Calu3 (cell line): ENCODE measurements at regions of chr3 and their contacts with region 1.

Region 1: GRCh38 chr3:39639344-39640236 is 169.8 kb upstream of the MYRIP start:
- DNase-seq: peak; percentile 63
- H3K4me3 Mint-ChIP-seq: no peak overlapping the region
- H3K27ac Mint-ChIP-seq: peak overlapping the region; percentile 81
- H3K4me1 Mint-ChIP-seq: peaks cover 30% of the 10 kb centered on the region
- H3K27me3 Mint-ChIP-seq: no peaks in the 10 kb centered on the region
- CTCF ChIP-seq: no peak

Region 2: GRCh38 chr3:38950581-38950980 is 689.0 kb before region 1 on chr3:
- CTCF ChIA-PET with region 1: no interaction called
- intact Hi-C with region 1: no loop called
- DNase-seq: no peak
- H3K4me3 Mint-ChIP-seq: no peak overlapping the region
- H3K27ac Mint-ChIP-seq: no peak overlapping the region
- H3K4me1 Mint-ChIP-seq: no peaks in the 10 kb centered on the region
- H3K27me3 Mint-ChIP-seq: peaks cover 65% of the 10 kb centered on the region
- CTCF ChIP-seq: no peak

Region 3: GRCh38 chr3:39707314-39707909 is 67.8 kb after region 1 on chr3:
- CTCF ChIA-PET with region 1: interaction called, 3 read pairs
- intact Hi-C with region 1: loop called (anchors 5 kb)
- DNase-seq: peak; percentile 32
- H3K4me3 Mint-ChIP-seq: no peak overlapping the region
- H3K27ac Mint-ChIP-seq: no peak overlapping the region
- H3K4me1 Mint-ChIP-seq: peaks cover 10% of the 10 kb centered on the region
- H3K27me3 Mint-ChIP-seq: no peaks in the 10 kb centered on the region
- CTCF ChIP-seq: no peak

Region 4: DNA sequence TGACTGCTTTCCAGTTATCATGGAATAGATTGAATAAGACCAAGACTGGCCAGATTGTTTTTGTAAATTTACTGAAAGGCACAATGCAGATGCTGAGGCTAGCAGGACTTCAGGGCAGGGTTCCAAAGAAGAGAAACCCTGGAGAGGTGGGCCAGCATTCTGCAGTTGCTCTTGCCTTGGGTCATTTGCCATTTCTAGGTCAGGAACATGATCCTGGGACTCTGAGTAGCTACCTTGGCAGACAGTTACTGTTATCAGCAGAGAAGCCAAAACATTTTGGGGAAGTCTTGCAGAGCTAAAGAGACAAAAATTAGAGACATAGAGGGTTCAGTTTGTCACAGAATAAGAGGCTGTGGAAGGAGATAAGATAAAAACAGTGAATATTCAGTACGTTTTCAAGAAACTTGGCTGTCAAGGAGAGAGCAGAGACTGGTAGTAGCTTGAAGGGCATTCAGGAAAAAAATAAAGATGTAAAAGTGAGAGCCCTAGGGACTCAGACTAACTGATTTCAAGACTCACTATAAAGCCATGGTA is 123.0 kb after region 1 on chr3:
- CTCF ChIA-PET with region 1: no interaction called
- intact Hi-C with region 1: no loop called
- DNase-seq: no peak
- H3K4me3 Mint-ChIP-seq: no peak overlapping the region
- H3K27ac Mint-ChIP-seq: no peak overlapping the region
- H3K4me1 Mint-ChIP-seq: no peaks in the 10 kb centered on the region
- H3K27me3 Mint-ChIP-seq: peaks cover 12% of the 10 kb centered on the region
- CTCF ChIP-seq: no peak

Region 5: GRCh38 chr3:40096661-40097111 is 457.1 kb after region 1 on chr3:
- CTCF ChIA-PET with region 1: no interaction called
- intact Hi-C with region 1: no loop called
- DNase-seq: no peak
- H3K4me3 Mint-ChIP-seq: no peak overlapping the region
- H3K27ac Mint-ChIP-seq: peak overlapping the region; percentile 68
- H3K4me1 Mint-ChIP-seq: peaks cover 39% of the 10 kb centered on the region
- H3K27me3 Mint-ChIP-seq: no peaks in the 10 kb centered on the region
- CTCF ChIP-seq: no peak